ENCODE measurements at regions of chr2 and their contacts with region 1.

Region 1: GRCh38 chr2:28751252-28751955 is at the start of gene PPP1CB:
- DNase-seq: peak; percentile 85 to 98 (median 96)

Region 2: GRCh38 chr2:28566521-28567041 is 184.8 kb before region 1 on chr2:
- intact Hi-C with region 1: loop called (anchors 5 kb)
- DNase-seq: peak; percentile 66 to 95 (median 88)

Region 3: GRCh38 chr2:28594289-28595108 is 156.9 kb before region 1 on chr2:
- intact Hi-C with region 1: loop called (anchors 10 kb)
- DNase-seq: peak; percentile 79 to 95 (median 89)

Region 4: GRCh38 chr2:28621172-28622100 is 130.0 kb before region 1 on chr2:
- intact Hi-C with region 1: loop called (anchors 10 kb)
- DNase-seq: peak; percentile 22 to 95 (median 76)

Region 5: DNA sequence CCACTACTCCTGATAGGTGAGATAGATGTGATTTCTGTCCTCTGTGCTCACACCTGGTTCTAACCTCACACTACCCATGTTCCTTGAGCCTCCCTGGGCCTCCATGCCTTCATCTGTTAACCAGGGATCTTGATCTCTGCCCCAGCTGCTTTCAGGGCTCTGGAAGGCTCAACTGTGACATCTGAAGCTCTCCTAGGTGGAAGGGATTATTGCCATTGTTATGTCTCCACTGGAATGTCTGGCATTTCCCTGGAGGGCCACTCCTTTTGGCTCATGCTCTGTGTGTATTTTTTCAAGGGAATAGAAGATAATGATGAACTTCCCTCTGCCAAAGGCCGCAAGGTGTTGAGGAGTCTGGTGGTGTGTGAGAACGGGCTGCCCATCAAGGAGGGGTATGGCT is 281.8 kb after region 1 on chr2:
- intact Hi-C with region 1: no loop called
- DNase-seq: no peak

Measured in head of caudate nucleus (tissue), 42 donors.